ENCODE measurements at regions of chr7 and their contacts with region 1.

Region 1: GRCh38 chr7:82592416-82592815 is 148.8 kb upstream of the CACNA2D1 start:
- DNase-seq: no peak
- ATAC-seq: no peak
- H3K4me3 ChIP-seq: no peak overlapping the region
- H3K4me3 Mint-ChIP-seq: no peak overlapping the region
- H3K27ac ChIP-seq: no peak overlapping the region
- H3K27ac Mint-ChIP-seq: no peak overlapping the region
- H3K4me1 ChIP-seq: no peaks in the 10 kb centered on the region
- H3K4me1 Mint-ChIP-seq: no peaks in the 10 kb centered on the region
- H3K27me3 ChIP-seq: no peaks in the 10 kb centered on the region
- H3K27me3 Mint-ChIP-seq: no peaks in the 10 kb centered on the region

Region 2: DNA sequence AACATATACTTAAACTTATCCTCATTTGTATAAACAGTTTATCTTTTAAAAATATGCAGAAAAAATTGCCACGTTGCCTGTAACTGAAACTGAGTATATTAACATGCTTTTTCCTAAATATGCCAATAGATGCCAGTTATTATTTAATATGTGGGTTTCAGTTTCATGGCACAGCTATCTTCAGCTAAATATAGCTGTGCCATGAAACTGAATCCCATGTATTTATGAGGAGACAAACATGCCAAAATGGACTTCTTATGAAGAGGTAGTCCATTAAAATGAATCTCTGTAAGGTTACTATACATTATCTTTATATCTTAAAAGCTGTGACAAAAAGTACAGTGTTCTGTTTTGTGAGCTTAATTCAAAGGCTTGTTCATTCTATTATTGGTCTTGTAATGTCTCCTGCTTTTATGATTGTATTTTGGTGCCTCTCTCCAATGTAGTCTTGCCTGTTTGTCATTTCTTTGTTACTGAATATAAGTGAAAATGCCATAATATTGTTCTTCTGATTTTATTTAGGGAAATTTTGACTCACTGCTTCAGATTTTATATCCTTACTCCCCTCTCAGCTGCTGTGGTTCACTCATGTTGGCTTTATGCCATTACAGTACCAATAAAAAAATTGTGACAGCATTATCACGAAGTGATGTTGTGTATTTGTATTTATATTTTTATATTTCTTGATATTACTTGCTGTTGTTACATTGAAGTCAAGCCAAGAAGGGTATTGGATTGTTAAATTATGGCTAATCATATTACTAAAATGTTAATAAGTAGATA is 114.5 kb before region 1 on chr7:
- CTCF ChIA-PET with region 1: no interaction called
- POLR2A ChIA-PET with region 1: interaction called in 1 of 2 experiments, 10 read pairs
- DNase-seq: no peak
- ATAC-seq: no peak
- H3K4me3 ChIP-seq: no peak overlapping the region
- H3K4me3 Mint-ChIP-seq: no peak overlapping the region
- H3K27ac ChIP-seq: no peak overlapping the region
- H3K27ac Mint-ChIP-seq: no peak overlapping the region
- H3K4me1 ChIP-seq: no peaks in the 10 kb centered on the region
- H3K4me1 Mint-ChIP-seq: no peaks in the 10 kb centered on the region
- H3K27me3 ChIP-seq: no peaks in the 10 kb centered on the region
- H3K27me3 Mint-ChIP-seq: no peaks in the 10 kb centered on the region

Region 3: GRCh38 chr7:82755705-82756551 is 163.5 kb after region 1 on chr7:
- CTCF ChIA-PET with region 1: no interaction called
- POLR2A ChIA-PET with region 1: no interaction called
- DNase-seq: no peak
- ATAC-seq: no peak
- H3K4me3 ChIP-seq: no peak overlapping the region
- H3K4me3 Mint-ChIP-seq: no peak overlapping the region
- H3K27ac ChIP-seq: no peak overlapping the region
- H3K27ac Mint-ChIP-seq: no peak overlapping the region
- H3K4me1 ChIP-seq: no peaks in the 10 kb centered on the region
- H3K4me1 Mint-ChIP-seq: no peaks in the 10 kb centered on the region
- H3K27me3 ChIP-seq: no peaks in the 10 kb centered on the region
- H3K27me3 Mint-ChIP-seq: no peaks in the 10 kb centered on the region

Measured in T-cell (primary cell).